Naive thymus-derived CD4-positive, alpha-beta T cell (primary cell): ENCODE measurements at regions of chr20 and their contacts with region 1.

Region 1: GRCh38 chr20:5126512-5127203 is at the start of gene CDS2:
- DNase-seq: peak; percentile 99
- ATAC-seq: peak; percentile 93
- H3K4me3 ChIP-seq: peak within 1 kb of the TSS; percentile 64
- H3K4me3 Mint-ChIP-seq: peak within 1 kb of the TSS; percentile 87 to 96 (median 93)
- H3K27ac ChIP-seq: peak within 1 kb of the TSS; percentile 99
- H3K27ac Mint-ChIP-seq: peak within 1 kb of the TSS; percentile 85 to 99 (median 94)
- H3K4me1 ChIP-seq: peaks cover 19 to 27% of the 10 kb centered on the region in 2 donors
- H3K4me1 Mint-ChIP-seq: peaks cover 15 to 58% (median 41%) of the 10 kb centered on the region in 7 donors
- H3K27me3 ChIP-seq: no peaks in the 10 kb centered on the region
- H3K27me3 Mint-ChIP-seq: no peaks in the 10 kb centered on the region
- total RNA-seq, gene CDS2: 48.3 to 58.3 (median 57.8) TPM

Region 2: DNA sequence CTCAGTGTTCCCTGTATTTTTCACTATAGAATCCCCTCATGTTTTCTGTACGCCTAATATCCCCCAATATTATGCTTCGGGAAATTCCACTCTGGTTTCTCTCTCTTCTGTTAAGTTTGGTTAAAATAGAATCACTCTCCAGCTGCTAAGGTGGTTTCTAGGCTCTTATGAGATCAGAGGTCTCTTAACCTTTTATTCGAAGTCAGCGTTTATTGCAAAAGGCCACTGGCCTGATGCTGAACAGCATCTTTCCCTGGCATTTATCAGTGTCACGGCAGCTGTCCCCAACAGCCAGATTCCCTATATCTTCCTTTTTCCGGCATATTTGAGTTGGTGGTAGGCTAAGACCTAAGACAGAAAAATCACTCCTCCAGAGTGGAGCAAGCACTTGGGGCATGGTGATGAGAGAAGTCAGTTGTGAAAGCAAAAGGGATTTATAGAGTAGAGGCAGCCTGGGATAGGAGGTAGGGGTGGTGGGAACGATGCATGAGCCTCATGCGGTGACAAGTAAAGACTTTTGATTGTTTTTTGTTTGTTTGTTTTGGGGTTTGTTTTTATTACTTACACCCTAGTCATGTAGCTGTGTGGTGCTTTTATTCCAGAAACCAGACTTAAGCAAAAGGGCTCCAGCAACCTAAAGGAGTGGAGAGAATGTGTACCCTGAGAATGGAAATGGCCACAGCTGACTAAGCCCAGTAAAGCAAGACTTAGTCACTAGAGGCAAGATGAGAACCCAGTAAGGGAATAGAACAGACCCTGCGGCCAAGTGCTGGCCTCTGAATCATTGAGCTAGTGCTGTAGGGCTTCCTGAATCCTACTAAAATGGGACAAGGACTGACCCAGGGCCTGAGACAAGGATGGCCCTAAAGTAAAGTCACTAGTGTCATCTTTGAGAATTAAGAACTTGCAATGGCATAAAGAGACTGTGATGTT is 638.0 kb before region 1 on chr20:
- CTCF ChIA-PET with region 1: no interaction called
- POLR2A ChIA-PET with region 1: no interaction called
- intact Hi-C with region 1: no loop called
- DNase-seq: no peak
- ATAC-seq: no peak
- H3K4me3 ChIP-seq: no peak overlapping the region
- H3K4me3 Mint-ChIP-seq: no peak overlapping the region
- H3K27ac ChIP-seq: no peak overlapping the region
- H3K27ac Mint-ChIP-seq: no peak overlapping the region
- H3K4me1 ChIP-seq: no peaks in the 10 kb centered on the region
- H3K4me1 Mint-ChIP-seq: no peaks in the 10 kb centered on the region
- H3K27me3 ChIP-seq: no peaks in the 10 kb centered on the region
- H3K27me3 Mint-ChIP-seq: peaks cover 13 to 40% (median 28%) of the 10 kb centered on the region in 5 donors

Region 3: GRCh38 chr20:5078399-5078958 is 48.2 kb before region 1 on chr20:
- CTCF ChIA-PET with region 1: no interaction called
- POLR2A ChIA-PET with region 1: no interaction called
- intact Hi-C with region 1: no loop called
- DNase-seq: peak; percentile 39 to 78 (median 74)
- ATAC-seq: peak; percentile 95
- H3K4me3 ChIP-seq: peak overlapping the region; percentile 33
- H3K4me3 Mint-ChIP-seq: peak overlapping the region; percentile 61 to 92 (median 89)
- H3K27ac ChIP-seq: peak overlapping the region; percentile 79
- H3K27ac Mint-ChIP-seq: peak overlapping the region; percentile 97 to 100 (median 99)
- H3K4me1 ChIP-seq: peaks cover 16 to 25% of the 10 kb centered on the region in 2 donors
- H3K4me1 Mint-ChIP-seq: peaks cover 24 to 54% (median 32%) of the 10 kb centered on the region in 7 donors
- H3K27me3 ChIP-seq: no peaks in the 10 kb centered on the region
- H3K27me3 Mint-ChIP-seq: no peaks in the 10 kb centered on the region

Region 4: GRCh38 chr20:5168651-5169396 is 42.2 kb after region 1 on chr20:
- CTCF ChIA-PET with region 1: interaction called, 5 read pairs
- POLR2A ChIA-PET with region 1: interaction called, 8 read pairs
- intact Hi-C with region 1: loop called in 1 of 2 experiments (anchors 2 kb)
- DNase-seq: no peak
- ATAC-seq: peak; percentile 37
- H3K4me3 ChIP-seq: no peak overlapping the region
- H3K4me3 Mint-ChIP-seq: peak overlapping the region; percentile 11 to 77 (median 53)
- H3K27ac ChIP-seq: peak overlapping the region; percentile 37
- H3K27ac Mint-ChIP-seq: peak overlapping the region; percentile 77 to 93 (median 90)
- H3K4me1 ChIP-seq: peaks cover 0 to 21% of the 10 kb centered on the region in 2 donors
- H3K4me1 Mint-ChIP-seq: peaks cover 59 to 93% (median 74%) of the 10 kb centered on the region in 7 donors
- H3K27me3 ChIP-seq: no peaks in the 10 kb centered on the region
- H3K27me3 Mint-ChIP-seq: no peaks in the 10 kb centered on the region

Region 5: GRCh38 chr20:5222919-5223634 is 96.4 kb after region 1 on chr20:
- CTCF ChIA-PET with region 1: interaction called, 7 read pairs
- POLR2A ChIA-PET with region 1: interaction called, 6 read pairs
- intact Hi-C with region 1: loop called in 1 of 2 experiments (anchors 1 kb)
- DNase-seq: peak in 8 of 9 donors; percentile 4 to 50 (median 40)
- ATAC-seq: peak; percentile 61
- H3K4me3 ChIP-seq: no peak overlapping the region
- H3K4me3 Mint-ChIP-seq: no peak overlapping the region
- H3K27ac ChIP-seq: no peak overlapping the region
- H3K27ac Mint-ChIP-seq: no peak overlapping the region
- H3K4me1 ChIP-seq: no peaks in the 10 kb centered on the region
- H3K4me1 Mint-ChIP-seq: peaks cover 0 to 7% (median 0%) of the 10 kb centered on the region in 7 donors
- H3K27me3 ChIP-seq: no peaks in the 10 kb centered on the region
- H3K27me3 Mint-ChIP-seq: peaks cover 0 to 7% (median 4%) of the 10 kb centered on the region in 5 donors

Region 6: GRCh38 chr20:5835321-5835821 is 708.7 kb after region 1 on chr20:
- CTCF ChIA-PET with region 1: no interaction called
- POLR2A ChIA-PET with region 1: no interaction called
- intact Hi-C with region 1: loop called in 1 of 2 experiments (anchors 10 kb)
- DNase-seq: peak in 2 of 9 donors; percentile 5 to 34
- ATAC-seq: peak; percentile 54
- H3K4me3 ChIP-seq: no peak overlapping the region
- H3K4me3 Mint-ChIP-seq: peak overlapping the region in 9 of 10 donors; percentile 51 to 89 (median 69)
- H3K27ac ChIP-seq: peak overlapping the region; percentile 77
- H3K27ac Mint-ChIP-seq: peak overlapping the region; percentile 66 to 99 (median 96)
- H3K4me1 ChIP-seq: peaks cover 15 to 17% of the 10 kb centered on the region in 2 donors
- H3K4me1 Mint-ChIP-seq: peaks cover 19 to 55% (median 36%) of the 10 kb centered on the region in 7 donors
- H3K27me3 ChIP-seq: no peaks in the 10 kb centered on the region
- H3K27me3 Mint-ChIP-seq: no peaks in the 10 kb centered on the region